ENCODE measurements at regions of chr13 and their contacts with region 1.

Region 1: GRCh38 chr13:29595380-29596063 is at the start of gene SLC7A1:
- DNase-seq: peak; percentile 90
- H3K4me3 ChIP-seq: peak within 1 kb of the TSS; percentile 66 to 99 (median 75)
- H3K27ac ChIP-seq: peak within 1 kb of the TSS; percentile 90 to 96 (median 93)
- H3K4me1 ChIP-seq: peaks cover 0 to 41% (median 12%) of the 10 kb centered on the region in 4 donors
- H3K27me3 ChIP-seq: no peaks in the 10 kb centered on the region
- CTCF ChIP-seq: no peak
- EP300 ChIP-seq: no peak
- POLR2A ChIP-seq: no peak
- total RNA-seq, gene SLC7A1: 11.8 to 21.3 (median 15.9) TPM

Region 2: GRCh38 chr13:29435125-29435911 is 160.2 kb before region 1 on chr13:
- intact Hi-C with region 1: loop called (anchors 10 kb)
- DNase-seq: peak; percentile 88
- H3K4me3 ChIP-seq: no peak overlapping the region
- H3K27ac ChIP-seq: peak overlapping the region; percentile 73 to 88 (median 82)
- H3K4me1 ChIP-seq: peaks cover 0 to 55% (median 47%) of the 10 kb centered on the region in 4 donors
- H3K27me3 ChIP-seq: no peaks in the 10 kb centered on the region
- CTCF ChIP-seq: no peak
- EP300 ChIP-seq: peak; percentile 94 to 97 (median 96)
- POLR2A ChIP-seq: no peak

Region 3: GRCh38 chr13:29508130-29508875 is 87.2 kb before region 1 on chr13:
- intact Hi-C with region 1: loop called (anchors 2 kb)
- DNase-seq: peak; percentile 93
- H3K4me3 ChIP-seq: no peak overlapping the region
- H3K27ac ChIP-seq: peak overlapping the region in 2 of 4 donors; percentile 12 to 58
- H3K4me1 ChIP-seq: peaks cover 0 to 34% (median 28%) of the 10 kb centered on the region in 4 donors
- H3K27me3 ChIP-seq: no peaks in the 10 kb centered on the region
- CTCF ChIP-seq: peak; percentile 86 to 98 (median 94)
- EP300 ChIP-seq: no peak
- POLR2A ChIP-seq: no peak

Region 4: DNA sequence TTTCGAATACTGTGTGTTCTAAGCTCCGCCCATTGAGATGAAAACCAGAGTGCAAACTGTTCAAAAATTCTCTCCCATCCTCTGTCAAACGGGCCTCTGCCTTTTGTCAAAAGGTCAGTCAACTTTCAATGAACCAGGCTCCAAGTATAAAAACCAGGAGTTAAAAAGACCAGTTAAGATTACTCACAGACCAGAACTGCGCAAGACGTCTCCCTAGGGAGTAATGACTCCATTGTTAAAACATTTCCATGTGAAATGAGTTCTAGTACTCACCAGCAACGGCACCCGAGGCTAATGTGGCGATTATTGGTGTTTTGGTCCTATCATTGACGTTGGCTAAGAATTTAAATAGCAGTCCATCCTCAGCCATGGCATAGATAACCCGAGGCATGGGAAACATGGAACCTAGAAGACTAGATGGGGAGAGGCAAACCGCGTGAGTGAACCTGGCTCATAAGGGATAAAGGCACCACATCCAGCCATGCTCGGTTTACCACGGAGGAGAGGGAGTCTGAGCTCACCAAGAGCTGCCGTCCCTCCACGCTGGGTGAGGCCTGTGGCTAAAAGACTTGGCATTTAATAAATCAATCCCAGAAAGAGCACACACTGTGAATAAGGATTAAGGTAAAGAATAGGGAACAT is 73.4 kb before region 1 on chr13:
- intact Hi-C with region 1: no loop called
- DNase-seq: no peak
- H3K4me3 ChIP-seq: no peak overlapping the region
- H3K27ac ChIP-seq: peak overlapping the region in 2 of 4 donors; percentile 49 to 66
- H3K4me1 ChIP-seq: peaks cover 0 to 19% (median 10%) of the 10 kb centered on the region in 4 donors
- H3K27me3 ChIP-seq: no peaks in the 10 kb centered on the region
- CTCF ChIP-seq: no peak
- EP300 ChIP-seq: peak in 1 of 4 donors; percentile 46
- POLR2A ChIP-seq: no peak

Region 5: GRCh38 chr13:29743201-29743786 is 147.8 kb after region 1 on chr13:
- intact Hi-C with region 1: loop called (anchors 1 kb)
- DNase-seq: peak; percentile 96
- H3K4me3 ChIP-seq: peak overlapping the region in 1 of 4 donors; percentile 15
- H3K27ac ChIP-seq: peak overlapping the region; percentile 52 to 86 (median 82)
- H3K4me1 ChIP-seq: peaks cover 0 to 30% (median 24%) of the 10 kb centered on the region in 4 donors
- H3K27me3 ChIP-seq: no peaks in the 10 kb centered on the region
- CTCF ChIP-seq: no peak
- EP300 ChIP-seq: peak; percentile 48 to 80 (median 72)
- POLR2A ChIP-seq: no peak

Region 6: DNA sequence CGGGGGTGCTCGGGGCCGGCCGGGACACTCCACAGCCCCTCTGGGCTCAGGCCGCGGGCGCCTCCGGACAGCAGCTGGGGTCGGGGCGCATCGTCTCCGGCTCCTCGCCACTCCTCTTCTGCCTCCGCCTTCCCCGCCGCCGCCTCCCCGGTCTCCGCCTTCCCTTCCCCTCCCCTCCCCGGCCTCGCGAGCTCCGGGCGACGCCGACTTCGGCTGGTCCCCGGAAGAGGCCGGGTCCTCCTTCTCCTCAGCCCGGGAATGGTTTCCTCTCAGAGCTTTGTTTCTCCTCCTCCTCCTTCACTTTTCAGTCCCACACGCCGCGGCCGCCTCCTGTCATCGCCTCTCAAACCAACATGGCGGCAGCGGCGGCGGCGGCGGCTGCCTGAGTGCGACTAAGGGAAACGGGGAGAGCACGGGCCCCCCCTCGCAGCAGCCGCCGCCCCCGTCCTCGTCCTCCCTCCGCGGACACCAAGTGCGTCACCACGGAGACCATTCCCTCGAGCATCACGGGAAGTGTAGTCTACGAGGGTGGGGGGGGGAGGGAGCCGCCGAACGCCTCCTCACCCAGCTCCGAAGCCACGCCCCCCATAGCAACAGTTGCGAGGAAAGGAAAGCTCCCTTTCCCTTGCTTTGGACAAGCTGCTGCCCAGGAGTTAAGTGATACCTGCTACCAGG is 254.8 kb after region 1 on chr13 and contains the start of gene UBL3:
- intact Hi-C with region 1: loop called (anchors 2 kb)
- DNase-seq: peak; percentile 99
- H3K4me3 ChIP-seq: peak within 1 kb of the TSS; percentile 84 to 92 (median 88)
- H3K27ac ChIP-seq: peak within 1 kb of the TSS; percentile 97 to 99 (median 98)
- H3K4me1 ChIP-seq: peaks cover 0 to 22% (median 17%) of the 10 kb centered on the region in 4 donors
- H3K27me3 ChIP-seq: no peaks in the 10 kb centered on the region
- CTCF ChIP-seq: no peak
- EP300 ChIP-seq: peak in 1 of 4 donors; percentile 36
- POLR2A ChIP-seq: peak; percentile 71 to 80
- total RNA-seq, gene UBL3: 35.6 to 44.6 (median 40.6) TPM

Region 7: DNA sequence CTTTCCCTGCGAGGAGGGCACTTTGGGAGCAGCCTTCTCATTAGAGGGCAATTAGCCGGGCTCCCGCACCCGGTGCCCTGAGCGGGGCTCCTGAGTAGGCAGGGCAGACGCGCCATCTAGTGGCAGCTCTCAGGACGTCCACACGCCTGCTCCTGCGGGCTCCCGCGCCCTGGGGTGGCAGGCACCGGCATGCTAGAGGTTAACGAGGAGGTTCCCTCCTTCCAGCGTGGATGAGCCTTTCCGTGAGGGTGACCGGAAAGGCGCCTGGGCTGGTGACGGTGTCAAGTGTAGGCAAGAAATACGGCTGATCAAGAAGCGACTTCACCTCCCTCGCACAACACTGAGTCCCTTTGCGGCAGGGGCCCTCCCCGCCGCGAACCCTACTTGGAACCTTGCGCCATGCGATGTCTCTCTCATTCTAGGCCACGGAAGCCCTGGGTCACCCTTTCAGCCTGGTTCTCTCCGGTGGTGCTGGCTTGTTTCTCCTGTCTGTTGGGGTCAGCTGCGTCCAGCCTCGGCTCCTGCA is 1207.5 kb after region 1 on chr13:
- intact Hi-C with region 1: loop called (anchors 10 kb)
- DNase-seq: peak; percentile 93
- H3K4me3 ChIP-seq: peak overlapping the region; percentile 17 to 50 (median 46)
- H3K27ac ChIP-seq: peak overlapping the region; percentile 36 to 76 (median 64)
- H3K4me1 ChIP-seq: peaks cover 0 to 30% (median 13%) of the 10 kb centered on the region in 4 donors
- H3K27me3 ChIP-seq: no peaks in the 10 kb centered on the region
- CTCF ChIP-seq: peak; percentile 87 to 94 (median 91)
- EP300 ChIP-seq: peak in 1 of 4 donors; percentile 3
- POLR2A ChIP-seq: no peak